ENCODE measurements at regions of chr1 and their contacts with region 1.

Region 1: DNA sequence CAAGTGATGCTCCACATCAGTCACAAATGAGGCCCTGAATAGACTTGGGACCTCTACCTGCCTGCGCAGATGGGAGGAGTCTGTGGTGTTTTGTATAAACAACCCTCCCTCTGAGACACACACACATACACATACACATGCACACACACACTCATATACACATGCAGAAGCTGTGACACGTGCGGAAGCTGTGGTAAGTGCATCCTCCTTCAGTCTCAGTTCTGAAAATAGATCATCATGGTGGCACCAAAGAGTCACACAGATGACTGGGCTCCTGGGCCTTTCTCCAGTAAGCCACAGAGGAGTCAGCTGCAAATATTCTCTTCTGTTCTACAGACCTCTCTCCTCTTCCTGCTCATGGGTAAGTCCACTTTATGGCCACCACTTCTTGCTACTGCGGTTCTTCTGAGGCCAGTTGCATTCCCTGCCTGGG is at the start of gene LY9:
- DNase-seq: peak; percentile 96
- ATAC-seq: peak; percentile 93
- H3K4me3 ChIP-seq: peak within 1 kb of the TSS; percentile 41 to 87 (median 63)
- H3K4me3 Mint-ChIP-seq: peak within 1 kb of the TSS; percentile 99
- H3K27ac ChIP-seq: peak within 1 kb of the TSS; percentile 95 to 98
- H3K27ac Mint-ChIP-seq: peak within 1 kb of the TSS; percentile 98
- H3K4me1 ChIP-seq: peaks cover 62 to 68% of the 10 kb centered on the region in 2 donors
- H3K4me1 Mint-ChIP-seq: peaks cover 68% of the 10 kb centered on the region
- H3K27me3 ChIP-seq: no peaks in the 10 kb centered on the region
- H3K27me3 Mint-ChIP-seq: no peaks in the 10 kb centered on the region
- CTCF ChIP-seq: no peak
- total RNA-seq, gene LY9: 365 and 367 TPM in 2 replicates

Region 2: GRCh38 chr1:160837558-160838205 is 41.7 kb after region 1 on chr1:
- CTCF ChIA-PET with region 1: interaction called, 10 read pairs
- POLR2A ChIA-PET with region 1: no interaction called
- intact Hi-C with region 1: loop called (anchors 5 kb)
- DNase-seq: peak; percentile 91
- ATAC-seq: peak; percentile 97
- H3K4me3 ChIP-seq: peak overlapping the region in 1 of 5 experiments; percentile 30
- H3K4me3 Mint-ChIP-seq: peak overlapping the region; percentile 41
- H3K27ac ChIP-seq: peak overlapping the region; percentile 71 to 72
- H3K27ac Mint-ChIP-seq: peak overlapping the region; percentile 90
- H3K4me1 ChIP-seq: peaks cover 33 to 34% of the 10 kb centered on the region in 2 donors
- H3K4me1 Mint-ChIP-seq: peaks cover 41% of the 10 kb centered on the region
- H3K27me3 ChIP-seq: no peaks in the 10 kb centered on the region
- H3K27me3 Mint-ChIP-seq: no peaks in the 10 kb centered on the region
- CTCF ChIP-seq: peak; percentile 65

Measured in B cell (primary cell).